ENCODE measurements at regions of chr10 and their contacts with region 1.

Region 1: GRCh38 chr10:103966671-103967447 is at the start of gene SLK:
- DNase-seq: peak; percentile 77 to 86 (median 80)
- H3K4me3 ChIP-seq: peak within 1 kb of the TSS; percentile 90 to 99 (median 93)
- H3K4me3 Mint-ChIP-seq: peak within 1 kb of the TSS; percentile 98 to 100
- H3K27ac ChIP-seq: peak within 1 kb of the TSS; percentile 42 to 93
- H3K27ac Mint-ChIP-seq: peak within 1 kb of the TSS; percentile 87 to 95 (median 93)
- H3K4me1 ChIP-seq: peaks cover 23 to 43% of the 10 kb centered on the region in 2 donors
- H3K4me1 Mint-ChIP-seq: peaks cover 42% of the 10 kb centered on the region
- H3K27me3 ChIP-seq: no peaks in the 10 kb centered on the region
- H3K27me3 Mint-ChIP-seq: peaks cover 0 to 1% (median 0%) of the 10 kb centered on the region in 3 donors
- CTCF ChIP-seq: no peak
- polyA plus RNA-seq, gene SLK: 2.9 to 6.5 (median 4.4) TPM

Region 2: DNA sequence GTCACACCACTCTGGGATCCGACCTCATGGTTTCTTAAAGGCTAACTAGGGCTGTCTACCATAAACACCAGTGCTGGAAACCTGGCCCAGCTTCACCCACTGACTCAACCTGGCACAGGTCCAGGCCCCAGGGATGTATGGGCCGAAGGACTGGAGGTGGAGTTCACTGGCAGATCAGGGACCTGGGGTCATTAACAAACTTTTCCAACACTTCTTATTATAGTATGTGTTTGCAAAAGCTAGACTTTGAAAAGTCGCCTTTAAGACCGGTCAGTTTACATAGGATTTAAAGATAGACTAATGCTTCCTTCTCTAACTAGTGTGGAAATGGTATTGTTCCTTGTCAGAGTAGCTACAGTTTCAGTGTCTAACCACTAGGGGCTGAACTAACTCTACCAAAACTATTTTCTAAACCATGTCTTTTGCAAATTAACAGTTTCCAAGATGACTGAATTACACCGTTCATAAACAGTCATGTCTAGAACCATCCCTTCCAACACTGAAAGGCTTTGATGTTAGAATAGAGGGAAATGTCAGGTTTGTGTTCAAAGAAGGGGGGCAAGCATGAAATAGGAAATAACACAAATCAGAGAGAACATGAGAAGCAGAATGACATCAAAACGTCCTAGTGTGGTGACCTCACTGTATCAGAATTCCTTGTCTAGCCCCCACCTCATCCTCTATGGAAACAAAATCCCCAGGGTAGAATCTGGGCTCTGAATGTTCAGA is 78.6 kb before region 1 on chr10:
- intact Hi-C with region 1: loop called in 1 of 2 experiments (anchors 5 kb)
- DNase-seq: peak; percentile 47 to 66 (median 58)
- H3K4me3 ChIP-seq: no peak overlapping the region
- H3K4me3 Mint-ChIP-seq: no peak overlapping the region
- H3K27ac ChIP-seq: no peak overlapping the region
- H3K27ac Mint-ChIP-seq: peak overlapping the region in 3 of 7 donors; percentile 20 to 54 (median 45)
- H3K4me1 ChIP-seq: peaks cover 7 to 18% of the 10 kb centered on the region in 2 donors
- H3K4me1 Mint-ChIP-seq: peaks cover 21% of the 10 kb centered on the region
- H3K27me3 ChIP-seq: no peaks in the 10 kb centered on the region
- H3K27me3 Mint-ChIP-seq: peaks cover 0 to 2% (median 0%) of the 10 kb centered on the region in 3 donors
- CTCF ChIP-seq: peak; percentile 83

Region 3: GRCh38 chr10:104121520-104122224 is 154.8 kb after region 1 on chr10 and contains the start of gene SFR1:
- intact Hi-C with region 1: loop called (anchors 5 to 10 kb)
- DNase-seq: peak; percentile 98 to 99 (median 99)
- H3K4me3 ChIP-seq: peak within 1 kb of the TSS; percentile 94 to 97 (median 95)
- H3K4me3 Mint-ChIP-seq: peak within 1 kb of the TSS; percentile 86 to 91
- H3K27ac ChIP-seq: peak within 1 kb of the TSS; percentile 96 to 100
- H3K27ac Mint-ChIP-seq: peak within 1 kb of the TSS; percentile 98 to 100 (median 99)
- H3K4me1 ChIP-seq: peaks cover 12 to 18% of the 10 kb centered on the region in 2 donors
- H3K4me1 Mint-ChIP-seq: peaks cover 14% of the 10 kb centered on the region
- H3K27me3 ChIP-seq: no peaks in the 10 kb centered on the region
- H3K27me3 Mint-ChIP-seq: peaks cover 0 to 5% (median 1%) of the 10 kb centered on the region in 3 donors
- CTCF ChIP-seq: peak; percentile 62
- polyA plus RNA-seq, gene SFR1: 6.4 to 18.1 (median 16.9) TPM

Measured in CD14-positive monocyte (primary cell).